Ovary (tissue), 10 donors: ENCODE measurements at regions of chr7 and their contacts with region 1.

Region 1: GRCh38 chr7:120475994-120476393 is 203.0 kb downstream of the KCND2 start:
- DNase-seq: no peak
- H3K4me3 ChIP-seq: no peak overlapping the region
- H3K27ac ChIP-seq: no peak overlapping the region
- H3K4me1 ChIP-seq: no peaks in the 10 kb centered on the region
- H3K27me3 ChIP-seq: no peaks in the 10 kb centered on the region
- CTCF ChIP-seq: no peak
- EP300 ChIP-seq: no peak
- POLR2A ChIP-seq: no peak

Region 2: GRCh38 chr7:120064565-120064964 is 411.4 kb before region 1 on chr7:
- intact Hi-C with region 1: no loop called
- DNase-seq: no peak
- H3K4me3 ChIP-seq: no peak overlapping the region
- H3K27ac ChIP-seq: no peak overlapping the region
- H3K4me1 ChIP-seq: no peaks in the 10 kb centered on the region
- H3K27me3 ChIP-seq: no peaks in the 10 kb centered on the region
- CTCF ChIP-seq: no peak
- EP300 ChIP-seq: no peak
- POLR2A ChIP-seq: no peak

Region 3: DNA sequence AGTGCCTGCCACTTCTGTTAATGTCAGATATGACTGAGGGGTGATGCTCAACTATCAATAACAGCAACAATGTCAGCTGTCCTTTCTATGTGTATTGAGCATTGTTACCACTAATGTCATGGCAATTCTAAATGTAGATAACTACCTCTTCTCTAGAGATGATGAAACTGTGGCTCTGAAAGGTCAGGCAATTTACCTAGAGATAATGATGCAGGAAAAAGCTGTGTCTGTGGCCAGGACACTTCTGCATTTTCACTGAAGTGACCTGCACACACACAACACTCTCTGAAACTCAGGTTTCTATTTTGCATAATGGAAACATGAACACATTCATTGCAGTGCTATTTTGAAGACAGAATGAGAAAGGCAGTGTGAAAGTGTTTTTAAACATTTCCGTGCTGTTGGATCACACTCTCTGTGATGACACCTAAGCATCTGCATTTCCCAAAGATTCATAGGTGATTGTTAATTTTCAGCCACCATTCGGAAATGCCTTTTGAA is 54.8 kb before region 1 on chr7:
- intact Hi-C with region 1: loop called in 1 of 4 experiments (anchors 5 kb)
- DNase-seq: no peak
- H3K4me3 ChIP-seq: no peak overlapping the region
- H3K27ac ChIP-seq: no peak overlapping the region
- H3K4me1 ChIP-seq: no peaks in the 10 kb centered on the region
- H3K27me3 ChIP-seq: no peaks in the 10 kb centered on the region
- CTCF ChIP-seq: no peak
- EP300 ChIP-seq: no peak
- POLR2A ChIP-seq: no peak